Stomach (tissue), 19 donors: ENCODE measurements at regions of chr17 and their contacts with region 1.

Region 1: GRCh38 chr17:6666077-6666521 is 14.5 kb downstream of the C17orf100 start:
- DNase-seq: peak; percentile 76 to 92
- H3K4me3 ChIP-seq: no peak overlapping the region
- H3K27ac ChIP-seq: no peak overlapping the region
- H3K4me1 ChIP-seq: peaks cover 0 to 7% (median 1%) of the 10 kb centered on the region in 4 donors
- H3K27me3 ChIP-seq: peaks cover 0 to 33% (median 0%) of the 10 kb centered on the region in 3 donors
- CTCF ChIP-seq: peak in 5 of 7 experiments; percentile 82 to 88 (median 82)
- EP300 ChIP-seq: no peak
- POLR2A ChIP-seq: no peak

Region 2: GRCh38 chr17:6366221-6366666 is 299.9 kb before region 1 on chr17:
- intact Hi-C with region 1: no loop called
- DNase-seq: no peak
- H3K4me3 ChIP-seq: no peak overlapping the region
- H3K27ac ChIP-seq: no peak overlapping the region
- H3K4me1 ChIP-seq: no peaks in the 10 kb centered on the region
- H3K27me3 ChIP-seq: peaks cover 0 to 44% (median 4%) of the 10 kb centered on the region in 3 donors
- CTCF ChIP-seq: no peak
- EP300 ChIP-seq: no peak
- POLR2A ChIP-seq: no peak

Region 3: DNA sequence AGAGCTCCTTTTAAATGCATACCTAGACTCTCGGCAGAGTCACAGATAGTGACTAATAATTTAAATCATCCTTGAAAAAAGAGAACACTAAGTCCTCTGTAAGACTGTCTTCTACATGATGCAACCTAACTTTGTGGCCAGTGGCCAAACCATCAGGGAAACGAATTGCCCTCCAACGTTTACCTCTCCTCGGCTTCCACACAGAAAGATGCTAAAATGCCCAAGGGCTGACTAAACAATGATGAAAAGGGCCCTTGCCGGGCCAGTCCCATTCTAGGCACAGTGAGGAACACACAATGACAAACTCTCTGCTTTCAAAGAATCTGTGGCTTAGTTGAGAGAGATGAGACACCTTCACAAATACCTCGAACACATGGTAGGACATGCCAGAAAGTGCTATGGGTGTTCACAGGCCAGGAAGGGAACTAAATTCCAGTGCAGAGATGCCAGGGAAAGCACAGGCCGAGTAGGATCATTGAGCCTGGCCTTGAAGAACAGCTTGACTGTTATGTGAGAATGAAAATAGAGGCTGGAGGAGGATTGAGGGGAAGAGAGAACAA is 74.4 kb before region 1 on chr17:
- intact Hi-C with region 1: no loop called
- DNase-seq: no peak
- H3K4me3 ChIP-seq: no peak overlapping the region
- H3K27ac ChIP-seq: peak overlapping the region; percentile 63 to 76 (median 66)
- H3K4me1 ChIP-seq: peaks cover 5 to 28% (median 10%) of the 10 kb centered on the region in 4 donors
- H3K27me3 ChIP-seq: no peaks in the 10 kb centered on the region
- CTCF ChIP-seq: no peak
- EP300 ChIP-seq: no peak
- POLR2A ChIP-seq: no peak

Region 4: GRCh38 chr17:6843241-6843880 is 177.3 kb after region 1 on chr17:
- intact Hi-C with region 1: loop called (anchors 10 kb)
- DNase-seq: peak in 1 of 2 donors; percentile 76
- H3K4me3 ChIP-seq: no peak overlapping the region
- H3K27ac ChIP-seq: no peak overlapping the region
- H3K4me1 ChIP-seq: peaks cover 0 to 6% (median 0%) of the 10 kb centered on the region in 4 donors
- H3K27me3 ChIP-seq: peaks cover 0 to 50% (median 12%) of the 10 kb centered on the region in 3 donors
- CTCF ChIP-seq: peak in 3 of 7 experiments; percentile 39 to 51 (median 44)
- EP300 ChIP-seq: no peak
- POLR2A ChIP-seq: no peak

Region 5: DNA sequence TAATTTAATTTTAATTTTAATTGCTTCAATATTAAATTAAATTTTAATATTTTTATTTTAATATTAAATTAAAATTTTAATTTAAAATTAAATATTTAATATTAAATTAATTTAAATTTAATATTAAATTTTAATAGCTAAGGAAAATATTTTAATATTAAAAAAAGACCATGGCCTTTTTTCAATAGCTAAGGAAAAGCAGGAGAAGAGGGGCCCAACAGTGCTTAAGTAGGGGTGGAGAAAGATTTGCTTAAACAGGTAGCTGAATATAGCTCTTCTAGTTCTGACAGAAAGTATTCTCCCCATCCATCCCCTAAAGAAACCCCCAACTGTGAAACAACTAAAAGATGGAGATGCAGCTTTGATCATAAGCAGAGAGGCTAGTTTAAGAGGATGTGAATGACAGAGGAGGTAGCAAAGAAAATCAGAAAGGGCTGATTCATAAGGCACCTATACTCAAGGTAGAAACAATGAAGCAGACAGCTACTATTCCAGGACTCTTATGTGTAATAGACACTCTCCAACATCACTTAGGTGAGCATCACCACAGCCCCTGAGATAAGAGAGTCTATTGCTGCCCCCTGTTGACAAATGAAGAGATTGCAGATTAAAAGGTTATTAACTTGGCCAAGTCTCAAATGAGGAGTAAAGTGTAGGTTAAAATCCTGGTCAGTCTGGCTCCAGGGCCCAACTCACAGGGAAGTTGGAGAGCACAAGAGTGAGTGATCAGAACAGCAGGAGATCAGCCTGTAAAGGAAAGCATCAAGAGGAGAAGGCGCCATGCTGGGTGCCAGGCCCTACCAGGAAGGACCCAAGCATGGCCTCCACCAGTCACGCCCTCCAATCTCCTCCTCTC is 338.5 kb after region 1 on chr17:
- intact Hi-C with region 1: loop called (anchors 10 kb)
- DNase-seq: peak in 1 of 2 donors; percentile 81
- H3K4me3 ChIP-seq: no peak overlapping the region
- H3K27ac ChIP-seq: no peak overlapping the region
- H3K4me1 ChIP-seq: peaks cover 2 to 25% (median 14%) of the 10 kb centered on the region in 4 donors
- H3K27me3 ChIP-seq: no peaks in the 10 kb centered on the region
- CTCF ChIP-seq: peak in 5 of 7 experiments; percentile 15 to 68 (median 48)
- EP300 ChIP-seq: no peak
- POLR2A ChIP-seq: no peak